Mammary epithelial cell (primary cell): ENCODE measurements at regions of chr9 and their contacts with region 1.

Region 1: DNA sequence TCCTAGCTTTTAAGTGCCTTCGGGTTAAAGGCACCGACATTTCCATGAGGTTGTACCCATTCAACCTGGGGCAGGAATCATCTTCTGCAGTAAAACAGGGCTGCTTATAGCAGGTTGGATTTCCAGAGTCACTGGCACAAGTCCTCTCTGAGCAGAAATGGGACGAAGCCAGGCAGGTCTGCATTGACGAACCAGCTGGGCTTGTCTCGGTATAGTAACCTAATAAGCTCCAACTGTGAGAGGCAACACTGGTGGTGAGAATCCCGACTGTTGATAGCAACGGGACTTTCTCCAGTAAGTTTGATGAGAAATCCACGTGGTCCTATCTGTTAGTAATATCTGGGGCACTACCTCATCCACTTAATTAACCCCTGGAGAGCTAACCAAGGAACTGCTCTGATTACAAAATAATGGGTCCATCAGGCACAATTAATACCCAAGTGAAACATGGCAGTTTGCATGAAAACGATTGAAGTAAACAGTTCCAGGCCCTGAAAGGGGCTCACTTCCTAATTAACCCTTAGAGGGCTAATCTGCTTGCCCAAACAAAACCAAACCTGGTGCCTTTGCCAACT is 491.0 kb upstream of the C9orf72 start:
- DNase-seq: no peak
- H3K4me3 ChIP-seq: no peak overlapping the region
- H3K27ac ChIP-seq: no peak overlapping the region
- H3K4me1 ChIP-seq: no peaks in the 10 kb centered on the region
- H3K27me3 ChIP-seq: peaks cover 2% of the 10 kb centered on the region
- CTCF ChIP-seq: no peak

Region 2: DNA sequence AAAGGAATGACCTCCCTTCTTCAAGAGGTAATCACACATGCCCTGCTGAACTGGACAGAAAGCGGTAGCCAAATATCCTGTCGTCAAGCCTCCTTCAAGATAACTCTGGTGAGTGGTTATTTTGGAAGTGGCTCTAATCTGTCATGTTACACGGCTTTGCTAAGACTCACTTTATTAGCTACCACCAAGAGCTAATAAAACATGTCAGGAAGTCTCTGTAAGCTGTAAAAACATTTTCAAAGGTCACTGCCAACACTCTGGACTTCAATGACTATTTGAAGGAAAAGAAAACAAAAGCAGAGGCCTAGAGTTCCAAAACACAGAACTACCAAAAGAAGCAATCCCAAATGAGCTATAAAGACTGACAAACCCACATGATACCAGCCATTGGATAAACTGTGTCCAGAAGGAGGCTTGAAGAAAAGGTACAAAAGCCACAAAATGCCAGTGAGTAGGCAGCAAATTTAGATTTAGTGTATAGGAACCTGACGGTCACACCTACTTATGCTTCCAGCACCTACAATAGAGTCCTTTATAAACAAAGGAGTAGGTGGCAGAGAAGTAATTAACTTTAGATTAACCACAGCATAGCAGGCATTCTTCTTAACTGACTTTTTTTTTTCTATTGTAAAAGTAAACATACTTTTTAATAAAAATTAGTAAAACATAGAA is 670.0 kb before region 1 on chr9:
- CTCF ChIA-PET with region 1: no interaction called
- dilution Hi-C with region 1: no loop called
- in situ Hi-C with region 1: no loop called
- intact Hi-C with region 1: no loop called
- DNase-seq: no peak
- H3K4me3 ChIP-seq: no peak overlapping the region
- H3K27ac ChIP-seq: peak overlapping the region; percentile 67
- H3K4me1 ChIP-seq: peaks cover 36% of the 10 kb centered on the region
- H3K27me3 ChIP-seq: no peaks in the 10 kb centered on the region
- CTCF ChIP-seq: no peak

Region 3: DNA sequence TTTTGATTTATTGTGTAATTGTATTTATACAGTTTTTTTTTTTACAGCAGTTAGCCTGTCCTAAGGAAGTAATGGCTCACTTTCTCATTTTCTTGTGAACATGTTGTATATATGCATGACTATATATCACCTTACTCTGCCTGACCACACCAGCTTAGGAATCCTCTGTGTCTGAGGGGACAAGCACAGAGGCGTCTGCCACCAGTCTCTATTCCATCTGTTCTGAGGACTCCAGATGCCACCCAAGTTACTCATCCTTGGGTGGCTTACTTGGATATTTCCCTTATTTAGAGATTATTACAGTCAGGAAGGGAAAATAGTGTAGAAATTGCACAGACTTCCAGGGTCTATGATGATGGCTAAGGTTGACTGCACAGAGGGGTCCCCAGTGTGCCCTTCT is 234.7 kb before region 1 on chr9:
- CTCF ChIA-PET with region 1: no interaction called
- dilution Hi-C with region 1: no loop called
- in situ Hi-C with region 1: no loop called
- intact Hi-C with region 1: loop called (anchors 5 kb)
- DNase-seq: no peak
- H3K4me3 ChIP-seq: no peak overlapping the region
- H3K27ac ChIP-seq: no peak overlapping the region
- H3K4me1 ChIP-seq: no peaks in the 10 kb centered on the region
- H3K27me3 ChIP-seq: no peaks in the 10 kb centered on the region
- CTCF ChIP-seq: no peak

Region 4: GRCh38 chr9:28166179-28166578 is 101.9 kb after region 1 on chr9:
- CTCF ChIA-PET with region 1: interaction called, 12 read pairs
- dilution Hi-C with region 1: no loop called
- in situ Hi-C with region 1: no loop called
- intact Hi-C with region 1: no loop called
- DNase-seq: peak; percentile 25
- H3K4me3 ChIP-seq: no peak overlapping the region
- H3K27ac ChIP-seq: no peak overlapping the region
- H3K4me1 ChIP-seq: no peaks in the 10 kb centered on the region
- H3K27me3 ChIP-seq: no peaks in the 10 kb centered on the region
- CTCF ChIP-seq: no peak